Aorta (tissue), 5 donors: ENCODE measurements at regions of chr3 and their contacts with region 1.

Region 1: GRCh38 chr3:114393367-114394072 is 99.7 kb downstream of the TIGIT start:
- DNase-seq: no peak
- ATAC-seq: no peak
- H3K4me3 ChIP-seq: no peak overlapping the region
- H3K27ac ChIP-seq: no peak overlapping the region
- H3K4me1 ChIP-seq: no peaks in the 10 kb centered on the region
- H3K27me3 ChIP-seq: no peaks in the 10 kb centered on the region

Region 2: DNA sequence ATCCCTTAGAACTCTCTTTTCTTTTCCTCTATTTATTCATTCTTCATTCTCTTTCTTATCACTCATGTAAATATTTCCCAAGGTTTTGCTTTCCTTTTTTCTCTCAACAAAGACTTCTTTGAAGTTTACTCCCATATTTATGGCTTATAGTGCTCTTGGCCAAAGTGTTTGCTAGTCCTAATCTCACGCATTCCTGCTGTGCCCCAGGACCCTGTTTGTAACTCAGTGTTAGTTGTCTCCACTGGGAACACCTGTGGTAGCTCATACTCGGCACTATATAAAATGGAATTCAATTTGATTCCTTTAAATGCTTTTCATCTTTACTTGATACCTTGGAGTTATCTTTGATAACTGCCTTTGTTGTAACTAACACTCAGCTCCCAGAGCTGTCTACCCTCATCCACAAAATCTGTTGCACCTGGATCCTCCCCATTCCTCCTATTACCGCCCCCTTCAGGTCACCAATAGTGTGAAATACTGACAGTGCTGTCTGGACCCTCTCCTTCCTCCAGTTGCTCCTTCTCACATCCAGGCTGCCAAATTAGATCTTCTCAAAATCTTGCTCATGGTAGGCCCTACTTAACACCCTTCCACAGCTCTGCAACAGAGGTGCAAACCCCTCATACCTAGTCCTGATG is 22.9 kb before region 1 on chr3:
- intact Hi-C with region 1: no loop called
- DNase-seq: no peak
- ATAC-seq: no peak
- H3K4me3 ChIP-seq: no peak overlapping the region
- H3K27ac ChIP-seq: no peak overlapping the region
- H3K4me1 ChIP-seq: peaks cover 0 to 5% of the 10 kb centered on the region in 2 donors
- H3K27me3 ChIP-seq: no peaks in the 10 kb centered on the region

Region 3: DNA sequence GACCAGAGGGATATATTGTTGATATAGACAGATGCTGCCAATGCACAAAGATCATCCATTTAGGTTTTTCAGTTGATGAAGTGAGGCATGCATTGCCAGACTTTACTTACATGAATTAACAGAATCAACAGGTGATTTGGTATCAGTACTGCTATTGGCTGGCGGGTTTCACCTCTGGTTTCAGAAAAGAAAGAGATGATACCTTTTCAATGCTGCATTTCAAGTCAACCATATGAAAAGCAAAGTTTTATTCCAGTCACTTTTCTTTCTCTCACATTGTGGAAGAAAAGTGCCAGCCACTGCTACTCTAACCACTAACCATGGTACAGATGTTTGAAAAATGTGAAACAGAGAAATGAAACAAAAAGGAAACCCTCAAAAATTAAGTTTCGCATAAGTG is 189.4 kb after region 1 on chr3:
- intact Hi-C with region 1: loop called in 1 of 2 experiments (anchors 10 kb)
- DNase-seq: no peak
- ATAC-seq: no peak
- H3K4me3 ChIP-seq: no peak overlapping the region
- H3K27ac ChIP-seq: no peak overlapping the region
- H3K4me1 ChIP-seq: peaks cover 0 to 2% of the 10 kb centered on the region in 2 donors
- H3K27me3 ChIP-seq: no peaks in the 10 kb centered on the region

Region 4: GRCh38 chr3:114624571-114625181 is 231.2 kb after region 1 on chr3:
- intact Hi-C with region 1: loop called in 1 of 2 experiments (anchors 10 kb)
- DNase-seq: peak; percentile 97 to 98
- ATAC-seq: peak; percentile 94
- H3K4me3 ChIP-seq: peak overlapping the region; percentile 23 to 67
- H3K27ac ChIP-seq: peak overlapping the region; percentile 86 to 87
- H3K4me1 ChIP-seq: peaks cover 2 to 8% of the 10 kb centered on the region in 2 donors
- H3K27me3 ChIP-seq: no peaks in the 10 kb centered on the region